ENCODE measurements at regions of chrX and their contacts with region 1.

Region 1: DNA sequence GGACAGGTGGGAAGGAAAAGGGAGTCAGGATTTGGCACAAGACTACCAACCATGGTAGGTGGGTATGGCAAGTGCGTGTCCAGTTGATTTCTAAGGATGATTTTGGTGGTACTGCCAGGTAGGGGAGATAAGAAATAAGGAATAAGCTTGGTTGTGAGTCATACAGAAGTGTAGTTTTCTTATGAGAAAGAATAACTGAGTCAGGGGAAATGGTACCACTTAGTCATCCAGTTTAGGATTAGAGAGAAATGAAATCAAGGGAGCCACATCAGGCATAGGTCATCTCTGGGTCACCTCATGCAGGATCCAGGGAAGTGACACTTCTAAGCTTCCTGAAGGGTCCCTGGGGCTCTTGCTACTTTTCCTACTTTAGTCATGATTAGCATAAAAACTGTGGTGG is 107.1 kb upstream of the C1GALT1C1 start:
- DNase-seq: peak; percentile 19
- H3K4me3 Mint-ChIP-seq: no peak overlapping the region
- H3K27ac Mint-ChIP-seq: no peak overlapping the region
- H3K4me1 Mint-ChIP-seq: peaks cover 22% of the 10 kb centered on the region
- H3K27me3 Mint-ChIP-seq: no peaks in the 10 kb centered on the region

Region 2: DNA sequence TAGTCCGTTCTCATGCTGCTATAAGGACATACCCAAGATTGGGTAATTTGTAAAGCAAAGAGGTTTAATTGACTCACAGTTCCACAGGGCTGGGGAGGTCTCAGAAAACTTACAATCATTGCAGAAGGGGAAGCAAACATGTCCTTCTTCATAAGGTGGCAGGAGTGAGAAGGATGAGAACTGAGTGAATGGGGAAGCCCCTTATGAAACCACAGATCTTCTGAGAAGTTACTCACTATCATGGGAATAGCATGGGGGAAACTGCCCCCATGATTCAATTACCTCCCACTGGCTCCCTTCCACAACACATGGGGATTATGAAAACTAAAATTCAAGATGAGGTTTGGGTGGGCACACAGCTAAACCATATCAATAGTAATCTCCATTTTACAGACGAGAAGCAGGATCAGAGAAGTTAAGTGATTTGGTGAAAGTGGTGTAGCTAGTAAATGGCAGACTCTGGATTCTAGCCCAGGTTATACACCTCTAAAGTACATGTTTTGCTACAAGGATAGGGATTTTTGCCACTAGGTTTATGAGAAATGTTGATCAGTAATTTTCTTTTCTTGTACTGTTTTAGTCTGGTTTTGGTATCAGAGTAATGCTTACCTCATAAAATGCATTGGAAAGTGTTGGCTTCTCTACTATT is 59.9 kb before region 1 on chrX:
- CTCF ChIA-PET with region 1: no interaction called
- POLR2A ChIA-PET with region 1: interaction called, 3 read pairs
- intact Hi-C with region 1: loop called (anchors 1 kb)
- DNase-seq: no peak
- H3K4me3 Mint-ChIP-seq: no peak overlapping the region
- H3K27ac Mint-ChIP-seq: peak overlapping the region; percentile 69
- H3K4me1 Mint-ChIP-seq: peaks cover 21% of the 10 kb centered on the region
- H3K27me3 Mint-ChIP-seq: no peaks in the 10 kb centered on the region

Region 3: DNA sequence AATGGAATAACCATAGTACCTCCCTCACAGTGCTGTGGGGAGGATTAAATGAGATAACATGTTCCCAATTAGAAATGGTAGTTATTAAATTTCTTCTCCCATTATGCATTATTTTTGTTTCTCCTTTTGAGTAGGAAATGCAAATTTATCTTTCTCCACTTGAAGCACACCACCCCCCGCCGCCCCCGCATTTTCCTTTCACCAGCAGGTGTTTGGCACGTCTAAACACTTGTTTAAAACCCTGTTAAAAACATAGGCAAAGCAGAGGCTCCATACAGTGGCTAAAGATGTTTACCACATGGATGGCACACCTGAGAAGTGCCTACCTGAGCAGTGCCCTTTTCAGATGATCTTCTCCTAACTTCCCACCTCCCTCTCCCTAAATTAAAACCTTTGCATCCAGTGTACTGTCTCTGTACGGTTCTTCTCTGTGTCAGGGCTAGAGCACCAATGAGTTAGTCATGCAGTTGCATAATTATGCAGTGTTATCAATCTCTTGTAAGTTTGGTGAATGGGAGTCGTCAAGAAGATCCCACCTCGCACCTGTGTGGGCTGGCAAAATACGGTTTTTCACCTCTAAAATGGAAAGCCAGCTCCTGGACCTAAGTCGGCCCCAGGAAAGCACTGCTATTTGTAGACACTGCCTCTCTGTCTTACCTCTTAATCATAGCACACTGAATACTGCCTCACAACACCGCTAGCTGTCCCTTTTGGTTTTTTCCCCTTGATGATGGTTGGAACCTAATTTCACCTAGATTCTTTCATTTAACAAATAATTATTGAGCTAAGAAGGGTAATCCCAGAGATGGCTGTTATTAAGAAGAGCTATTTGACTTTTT is 16.6 kb after region 1 on chrX:
- CTCF ChIA-PET with region 1: interaction called, 4 read pairs
- POLR2A ChIA-PET with region 1: no interaction called
- intact Hi-C with region 1: loop called (anchors 2 kb)
- DNase-seq: peak; percentile 44
- H3K4me3 Mint-ChIP-seq: peak overlapping the region; percentile 35
- H3K27ac Mint-ChIP-seq: peak overlapping the region; percentile 30
- H3K4me1 Mint-ChIP-seq: peaks cover 38% of the 10 kb centered on the region
- H3K27me3 Mint-ChIP-seq: no peaks in the 10 kb centered on the region

Region 4: GRCh38 chrX:121000587-121000986 is 263.6 kb after region 1 on chrX:
- CTCF ChIA-PET with region 1: no interaction called
- POLR2A ChIA-PET with region 1: no interaction called
- intact Hi-C with region 1: no loop called
- DNase-seq: no peak
- H3K4me3 Mint-ChIP-seq: no peak overlapping the region
- H3K27ac Mint-ChIP-seq: no peak overlapping the region
- H3K4me1 Mint-ChIP-seq: peaks cover 3% of the 10 kb centered on the region
- H3K27me3 Mint-ChIP-seq: no peaks in the 10 kb centered on the region